CD4-positive, alpha-beta T cell (primary cell): ENCODE measurements at regions of chrX and their contacts with region 1.

Region 1: DNA sequence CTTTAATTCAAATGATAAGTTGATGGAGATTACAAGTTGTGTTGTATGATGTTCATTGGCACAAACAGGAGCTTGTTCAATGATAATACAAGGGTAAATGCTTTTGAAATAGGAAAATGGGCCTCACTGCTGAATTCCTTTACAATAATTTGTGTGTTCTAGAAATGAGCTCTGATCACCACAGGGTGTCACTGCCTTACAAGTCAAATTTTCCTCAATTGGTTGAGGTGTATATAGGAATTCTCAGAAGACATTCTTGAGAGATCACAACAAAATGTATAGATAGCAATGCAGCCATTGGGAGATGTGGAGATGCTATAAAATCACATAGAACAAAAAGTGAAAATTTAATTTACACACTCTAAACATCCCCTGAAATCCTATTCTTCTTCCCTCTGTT is 49.6 kb downstream of the KLF8 start:
- DNase-seq: peak in 7 of 14 experiments; percentile 2 to 66 (median 38)
- ATAC-seq: peak; percentile 67
- H3K4me3 ChIP-seq: no peak overlapping the region
- H3K4me3 Mint-ChIP-seq: no peak overlapping the region
- H3K27ac ChIP-seq: no peak overlapping the region
- H3K27ac Mint-ChIP-seq: no peak overlapping the region
- H3K4me1 ChIP-seq: no peaks in the 10 kb centered on the region
- H3K4me1 Mint-ChIP-seq: peaks cover 8% of the 10 kb centered on the region
- H3K27me3 ChIP-seq: no peaks in the 10 kb centered on the region
- H3K27me3 Mint-ChIP-seq: no peaks in the 10 kb centered on the region
- CTCF ChIP-seq: peak; percentile 46

Region 2: GRCh38 chrX:55794405-55794804 is 487.4 kb before region 1 on chrX:
- CTCF ChIA-PET with region 1: no interaction called
- POLR2A ChIA-PET with region 1: no interaction called
- intact Hi-C with region 1: no loop called
- DNase-seq: no peak
- ATAC-seq: no peak
- H3K4me3 ChIP-seq: no peak overlapping the region
- H3K4me3 Mint-ChIP-seq: no peak overlapping the region
- H3K27ac ChIP-seq: no peak overlapping the region
- H3K27ac Mint-ChIP-seq: no peak overlapping the region
- H3K4me1 ChIP-seq: no peaks in the 10 kb centered on the region
- H3K4me1 Mint-ChIP-seq: no peaks in the 10 kb centered on the region
- H3K27me3 ChIP-seq: no peaks in the 10 kb centered on the region
- H3K27me3 Mint-ChIP-seq: no peaks in the 10 kb centered on the region
- CTCF ChIP-seq: no peak

Region 3: DNA sequence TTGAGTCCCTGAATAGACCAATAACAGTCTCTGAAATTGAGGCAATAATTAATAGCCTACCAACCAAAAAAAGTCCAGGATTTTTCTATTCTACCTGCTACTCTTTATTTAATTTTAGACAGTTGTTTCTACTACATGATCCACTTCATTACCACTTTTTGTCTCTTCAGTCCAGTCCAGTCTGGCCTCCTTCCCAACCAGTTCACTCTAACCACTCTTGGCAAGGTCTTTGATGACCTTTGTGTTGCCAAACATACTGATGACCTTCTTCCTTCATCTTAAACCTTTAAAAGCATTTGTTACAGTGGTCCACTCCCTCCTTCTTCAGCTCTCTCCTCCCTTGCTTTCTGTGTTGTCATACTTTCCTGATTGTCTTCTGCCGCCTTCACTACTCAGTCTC is 268.9 kb after region 1 on chrX:
- CTCF ChIA-PET with region 1: no interaction called
- POLR2A ChIA-PET with region 1: no interaction called
- intact Hi-C with region 1: no loop called
- DNase-seq: no peak
- ATAC-seq: no peak
- H3K4me3 ChIP-seq: no peak overlapping the region
- H3K4me3 Mint-ChIP-seq: no peak overlapping the region
- H3K27ac ChIP-seq: no peak overlapping the region
- H3K27ac Mint-ChIP-seq: no peak overlapping the region
- H3K4me1 ChIP-seq: no peaks in the 10 kb centered on the region
- H3K4me1 Mint-ChIP-seq: no peaks in the 10 kb centered on the region
- H3K27me3 ChIP-seq: no peaks in the 10 kb centered on the region
- H3K27me3 Mint-ChIP-seq: no peaks in the 10 kb centered on the region
- CTCF ChIP-seq: no peak

Region 4: GRCh38 chrX:56563231-56564161 is 281.7 kb after region 1 on chrX and contains the start of gene UBQLN2:
- CTCF ChIA-PET with region 1: no interaction called
- POLR2A ChIA-PET with region 1: interaction called, 3 read pairs
- intact Hi-C with region 1: loop called in 1 of 2 experiments (anchors 10 kb)
- DNase-seq: peak; percentile 61 to 89 (median 74)
- ATAC-seq: peak; percentile 76
- H3K4me3 ChIP-seq: peak within 1 kb of the TSS; percentile 80
- H3K4me3 Mint-ChIP-seq: peak within 1 kb of the TSS; percentile 90
- H3K27ac ChIP-seq: peak within 1 kb of the TSS; percentile 80 to 89
- H3K27ac Mint-ChIP-seq: peak within 1 kb of the TSS; percentile 96
- H3K4me1 ChIP-seq: no peaks in the 10 kb centered on the region
- H3K4me1 Mint-ChIP-seq: peaks cover 39% of the 10 kb centered on the region
- H3K27me3 ChIP-seq: no peaks in the 10 kb centered on the region
- H3K27me3 Mint-ChIP-seq: no peaks in the 10 kb centered on the region
- CTCF ChIP-seq: no peak
- total RNA-seq, gene UBQLN2: 48.7 to 49.1 TPM

Region 5: GRCh38 chrX:56729152-56729850 is 447.5 kb after region 1 on chrX and contains the start of gene NBDY:
- CTCF ChIA-PET with region 1: interaction called, 17 read pairs
- POLR2A ChIA-PET with region 1: interaction called, 7 read pairs
- intact Hi-C with region 1: loop called in 1 of 2 experiments (anchors 1 kb)
- DNase-seq: peak in 11 of 14 experiments; percentile 3 to 66 (median 15)
- ATAC-seq: peak; percentile 80
- H3K4me3 ChIP-seq: peak within 1 kb of the TSS; percentile 82
- H3K4me3 Mint-ChIP-seq: peak within 1 kb of the TSS; percentile 96
- H3K27ac ChIP-seq: peak within 1 kb of the TSS; percentile 61 to 81
- H3K27ac Mint-ChIP-seq: peak within 1 kb of the TSS; percentile 92
- H3K4me1 ChIP-seq: peaks cover 4% of the 10 kb centered on the region
- H3K4me1 Mint-ChIP-seq: peaks cover 53% of the 10 kb centered on the region
- H3K27me3 ChIP-seq: no peaks in the 10 kb centered on the region
- H3K27me3 Mint-ChIP-seq: no peaks in the 10 kb centered on the region
- CTCF ChIP-seq: no peak
- total RNA-seq, gene NBDY: 25.0 to 28.3 TPM

Region 6: DNA sequence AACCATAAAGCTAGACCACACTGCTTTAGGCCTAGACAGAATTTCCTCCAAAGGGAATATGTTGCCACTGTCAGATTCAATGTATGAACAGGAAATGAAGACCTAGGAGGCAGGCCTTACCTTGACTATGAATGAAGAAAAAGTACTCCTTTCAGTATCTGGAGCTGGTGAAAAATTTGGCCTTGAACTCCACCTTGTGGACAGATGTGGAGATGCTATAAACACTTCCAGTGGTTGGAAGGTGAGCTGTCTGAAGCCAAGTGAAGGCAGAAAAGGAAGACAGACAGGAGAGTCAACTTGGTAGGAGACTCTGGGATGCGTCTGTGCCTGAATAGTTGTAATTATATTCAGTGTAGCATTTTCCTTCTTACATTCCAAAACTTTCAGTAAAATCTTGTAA is 696.4 kb after region 1 on chrX:
- CTCF ChIA-PET with region 1: interaction called, 7 read pairs
- POLR2A ChIA-PET with region 1: no interaction called
- intact Hi-C with region 1: loop called in 1 of 2 experiments (anchors 2 kb)
- DNase-seq: peak in 12 of 14 experiments; percentile 2 to 71 (median 30)
- ATAC-seq: peak; percentile 89
- H3K4me3 ChIP-seq: no peak overlapping the region
- H3K4me3 Mint-ChIP-seq: no peak overlapping the region
- H3K27ac ChIP-seq: no peak overlapping the region
- H3K27ac Mint-ChIP-seq: peak overlapping the region; percentile 8
- H3K4me1 ChIP-seq: no peaks in the 10 kb centered on the region
- H3K4me1 Mint-ChIP-seq: peaks cover 5% of the 10 kb centered on the region
- H3K27me3 ChIP-seq: no peaks in the 10 kb centered on the region
- H3K27me3 Mint-ChIP-seq: no peaks in the 10 kb centered on the region
- CTCF ChIP-seq: peak; percentile 52

Region 7: DNA sequence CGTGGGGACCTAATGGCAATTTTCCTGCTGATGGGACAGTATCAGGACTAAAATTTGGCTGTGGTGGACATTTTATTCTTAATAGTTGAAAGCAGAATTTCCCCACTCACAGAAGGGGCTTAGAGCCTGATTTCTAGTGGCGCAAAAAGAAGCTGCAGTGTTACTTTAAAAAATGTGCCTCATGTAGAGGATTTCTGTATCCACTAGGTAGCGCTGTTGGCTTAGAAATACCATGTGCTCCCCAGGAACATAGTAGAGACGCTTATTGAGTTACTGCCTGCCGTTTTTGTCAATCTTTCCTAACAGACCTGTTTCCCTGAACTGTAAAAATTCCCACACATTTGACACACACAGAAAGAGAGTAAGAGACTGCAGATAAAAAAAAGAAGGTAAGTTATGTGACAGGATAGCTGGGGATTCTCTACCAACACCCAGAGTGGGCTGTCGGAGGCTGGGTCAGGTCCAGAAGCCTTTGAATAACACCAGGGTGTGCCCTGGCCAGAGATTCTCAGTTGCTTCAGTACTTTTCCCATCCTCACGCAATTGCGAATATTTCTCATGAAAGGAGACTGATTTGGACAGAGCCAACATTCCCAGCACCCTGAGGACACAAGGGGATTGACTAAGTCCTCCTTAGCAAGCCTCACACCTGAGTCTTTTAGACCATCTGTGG is 1540.0 kb after region 1 on chrX:
- CTCF ChIA-PET with region 1: no interaction called
- POLR2A ChIA-PET with region 1: no interaction called
- intact Hi-C with region 1: loop called in 1 of 2 experiments (anchors 10 kb)
- DNase-seq: peak in 9 of 14 experiments; percentile 1 to 75 (median 22)
- ATAC-seq: peak; percentile 46
- H3K4me3 ChIP-seq: no peak overlapping the region
- H3K4me3 Mint-ChIP-seq: no peak overlapping the region
- H3K27ac ChIP-seq: no peak overlapping the region
- H3K27ac Mint-ChIP-seq: no peak overlapping the region
- H3K4me1 ChIP-seq: peaks cover 4% of the 10 kb centered on the region
- H3K4me1 Mint-ChIP-seq: peaks cover 5% of the 10 kb centered on the region
- H3K27me3 ChIP-seq: no peaks in the 10 kb centered on the region
- H3K27me3 Mint-ChIP-seq: no peaks in the 10 kb centered on the region
- CTCF ChIP-seq: peak; percentile 63